ENCODE measurements at regions of chr1 and their contacts with region 1.

Region 1: DNA sequence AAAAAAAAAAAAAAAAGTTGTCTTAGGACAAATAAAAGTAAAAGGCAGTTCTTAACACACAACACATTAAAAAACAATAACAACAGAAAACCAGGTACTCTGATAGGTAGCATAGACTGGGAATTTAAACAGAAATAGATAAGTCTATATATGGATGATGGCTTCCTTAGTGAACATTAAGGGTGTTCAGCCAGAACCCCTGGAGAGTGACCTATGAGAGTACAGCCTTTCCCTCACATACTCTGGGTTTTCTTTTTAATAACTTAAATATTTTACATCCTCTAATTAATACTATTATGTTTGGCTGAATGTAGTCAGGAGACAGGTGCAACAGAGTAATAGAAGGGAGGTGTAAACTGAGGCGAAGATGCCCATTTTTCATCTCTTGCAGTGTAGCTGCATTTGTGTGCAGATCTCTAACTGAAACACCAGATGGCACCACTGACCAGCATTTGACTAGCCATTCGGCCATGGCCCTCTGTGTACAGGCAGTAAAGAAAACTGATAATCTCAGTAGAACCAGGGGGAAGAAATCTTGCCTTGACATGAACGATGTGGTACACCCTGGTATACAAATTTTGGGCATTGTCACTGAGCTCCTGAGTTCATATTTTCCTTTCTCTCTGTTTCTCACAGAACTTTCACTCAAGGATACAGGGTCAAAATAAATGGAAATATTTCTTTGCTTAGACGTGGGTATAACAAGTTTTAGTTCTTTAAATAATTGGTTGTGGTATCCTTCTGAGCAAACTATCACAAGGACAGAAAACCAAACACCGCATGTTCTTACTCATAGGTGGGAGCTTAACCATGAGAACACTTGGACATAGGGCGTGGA is 7.6 kb downstream of the TTF2 start:
- DNase-seq: no peak
- H3K4me3 ChIP-seq: no peak overlapping the region
- H3K27me3 ChIP-seq: no peaks in the 10 kb centered on the region
- CTCF ChIP-seq: peak; percentile 76

Region 2: GRCh38 chr1:116923421-116923820 is 144.3 kb before region 1 on chr1:
- CTCF ChIA-PET with region 1: no interaction called
- POLR2A ChIA-PET with region 1: no interaction called
- DNase-seq: no peak
- H3K4me3 ChIP-seq: no peak overlapping the region
- H3K27me3 ChIP-seq: no peaks in the 10 kb centered on the region
- CTCF ChIP-seq: no peak

Region 3: DNA sequence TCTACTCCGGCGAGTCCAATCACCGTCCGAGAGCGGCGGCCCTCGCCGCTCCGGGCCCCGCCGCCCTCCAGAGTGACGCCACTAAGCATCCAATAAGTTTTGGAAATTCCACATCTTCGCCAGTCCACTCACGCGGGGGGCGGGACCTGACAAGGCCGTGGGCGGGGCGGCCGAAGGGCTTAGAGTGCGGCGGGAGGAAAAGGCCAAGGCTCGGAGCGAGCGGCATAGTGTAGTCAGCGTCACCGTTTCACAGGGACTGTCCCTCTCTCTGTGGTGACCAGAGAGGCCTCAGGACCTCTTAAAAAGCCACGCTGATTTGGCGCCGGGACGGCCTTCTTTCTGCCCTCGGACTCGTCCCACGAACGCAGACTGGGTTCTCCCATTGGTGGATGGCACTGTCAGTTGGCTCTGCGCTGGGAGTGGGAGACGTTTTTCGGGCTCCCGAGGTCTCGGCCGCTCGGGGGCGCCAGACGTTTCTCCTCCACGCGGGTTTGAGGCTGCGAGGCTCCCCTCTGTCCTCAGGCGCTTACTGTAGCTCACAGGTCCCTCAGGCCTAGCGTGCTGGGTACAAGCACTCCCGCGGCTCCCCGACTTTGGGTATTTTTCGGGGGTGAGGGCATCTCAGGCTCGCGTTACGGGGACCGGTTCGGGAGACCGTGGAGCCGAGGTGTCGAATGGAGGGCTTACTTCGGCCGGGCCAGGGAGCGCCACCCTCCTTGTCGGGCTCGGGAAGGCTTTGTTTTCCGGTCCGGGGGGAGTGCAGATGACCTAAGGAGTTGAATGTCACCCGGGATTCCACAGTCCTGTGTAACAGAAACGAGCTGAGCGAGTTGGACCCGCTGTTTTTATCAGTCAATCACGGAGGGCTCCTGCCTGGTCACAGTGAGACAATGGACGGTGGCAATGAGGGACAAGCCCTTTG is 54.3 kb after region 1 on chr1:
- CTCF ChIA-PET with region 1: interaction called, 185 read pairs
- POLR2A ChIA-PET with region 1: no interaction called
- DNase-seq: peak; percentile 90
- H3K4me3 ChIP-seq: peak overlapping the region; percentile 73
- H3K27me3 ChIP-seq: no peaks in the 10 kb centered on the region
- CTCF ChIP-seq: peak; percentile 92

Region 4: GRCh38 chr1:117142200-117142599 is 74.4 kb after region 1 on chr1:
- CTCF ChIA-PET with region 1: interaction called, 10 read pairs
- POLR2A ChIA-PET with region 1: no interaction called
- DNase-seq: peak; percentile 75
- H3K4me3 ChIP-seq: no peak overlapping the region
- H3K27me3 ChIP-seq: no peaks in the 10 kb centered on the region
- CTCF ChIP-seq: no peak

Measured in BJ (cell line).